Activated CD4-positive, alpha-beta memory T cell treated with anti-CD3 and anti-CD28 coated beads for 36 hours (primary cell): ENCODE measurements at regions of chrX and their contacts with region 1.

Region 1: GRCh38 chrX:130091958-130092522 is 18.3 kb downstream of the ELF4 start:
- DNase-seq: peak; percentile 94
- H3K4me3 Mint-ChIP-seq: peak overlapping the region; percentile 84
- H3K27ac Mint-ChIP-seq: peak overlapping the region; percentile 98
- H3K4me1 Mint-ChIP-seq: peaks cover 51% of the 10 kb centered on the region
- H3K27me3 Mint-ChIP-seq: no peaks in the 10 kb centered on the region

Region 2: GRCh38 chrX:130110379-130111219 is 18.6 kb after region 1 on chrX and contains the start of gene ELF4:
- CTCF ChIA-PET with region 1: interaction called, 4 read pairs
- POLR2A ChIA-PET with region 1: interaction called, 4 read pairs
- intact Hi-C with region 1: loop called (anchors 2 kb)
- DNase-seq: peak; percentile 70
- H3K4me3 Mint-ChIP-seq: peak within 1 kb of the TSS; percentile 92
- H3K27ac Mint-ChIP-seq: peak within 1 kb of the TSS; percentile 92
- H3K4me1 Mint-ChIP-seq: peaks cover 44% of the 10 kb centered on the region
- H3K27me3 Mint-ChIP-seq: no peaks in the 10 kb centered on the region
- total RNA-seq, gene ELF4: 28.0 to 28.2 TPM

Region 3: DNA sequence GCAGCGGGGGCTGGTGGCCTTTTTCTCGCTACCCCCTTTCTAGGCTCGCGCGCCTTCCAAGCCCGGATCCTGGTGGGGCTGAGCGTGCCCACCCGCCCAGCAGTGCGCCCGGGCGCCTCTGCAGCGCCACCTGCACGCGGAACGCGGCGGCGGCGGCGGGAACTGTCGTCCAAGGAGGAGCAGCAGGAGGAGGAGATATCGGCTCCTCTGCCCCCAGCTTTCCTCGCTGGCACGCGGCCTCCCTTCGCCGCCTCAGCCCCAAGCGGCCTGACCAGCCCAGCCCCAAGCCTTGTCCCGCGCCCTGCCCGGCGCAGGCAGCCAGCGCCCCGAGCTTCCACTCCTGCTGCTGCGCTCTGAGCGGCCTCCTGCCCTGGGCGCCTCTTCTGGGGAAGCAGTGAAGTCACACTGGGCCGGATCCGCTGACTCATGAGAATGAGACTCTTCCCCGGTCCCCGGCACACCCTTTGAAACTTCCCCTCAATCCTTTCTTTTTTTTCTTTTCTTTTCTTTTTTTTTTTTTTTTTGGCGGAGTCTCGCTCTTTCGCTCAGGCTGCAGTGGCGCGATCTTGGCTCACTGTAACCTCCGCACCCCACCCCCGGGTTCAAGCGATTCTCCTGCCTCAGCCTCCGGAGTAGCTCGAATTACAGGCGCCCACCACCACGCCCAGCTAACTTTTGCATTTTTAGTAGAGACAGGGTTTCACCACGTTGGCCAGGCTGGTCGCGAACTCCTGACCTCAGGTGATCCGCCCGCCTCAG is 28.9 kb after region 1 on chrX:
- CTCF ChIA-PET with region 1: interaction called, 9 read pairs
- POLR2A ChIA-PET with region 1: no interaction called
- intact Hi-C with region 1: loop called (anchors 2 kb)
- DNase-seq: peak; percentile 76
- H3K4me3 Mint-ChIP-seq: peak overlapping the region; percentile 64
- H3K27ac Mint-ChIP-seq: peak overlapping the region; percentile 74
- H3K4me1 Mint-ChIP-seq: peaks cover 24% of the 10 kb centered on the region
- H3K27me3 Mint-ChIP-seq: no peaks in the 10 kb centered on the region

Region 4: DNA sequence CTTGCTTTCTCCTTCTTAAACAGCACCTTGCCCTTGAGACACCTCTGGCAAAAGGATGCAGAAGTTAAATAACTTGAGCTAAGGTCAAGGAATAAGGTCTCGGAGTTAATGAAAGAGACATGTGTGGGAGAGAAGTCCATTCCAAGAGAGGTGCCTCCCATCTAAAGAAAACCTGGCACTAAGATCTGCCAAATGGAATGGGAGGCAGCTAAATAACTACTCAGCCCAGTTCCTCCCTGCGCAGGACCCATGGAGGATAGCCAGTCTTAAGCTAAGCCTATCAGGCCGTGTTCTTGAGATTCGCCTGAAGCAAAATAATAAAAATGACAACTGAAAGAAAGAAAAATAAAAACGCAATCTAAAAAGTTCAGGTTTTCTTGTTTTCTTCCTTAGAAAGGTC is 39.0 kb after region 1 on chrX:
- CTCF ChIA-PET with region 1: no interaction called
- POLR2A ChIA-PET with region 1: no interaction called
- intact Hi-C with region 1: no loop called
- DNase-seq: no peak
- H3K4me3 Mint-ChIP-seq: no peak overlapping the region
- H3K27ac Mint-ChIP-seq: no peak overlapping the region
- H3K4me1 Mint-ChIP-seq: no peaks in the 10 kb centered on the region
- H3K27me3 Mint-ChIP-seq: no peaks in the 10 kb centered on the region